ENCODE measurements at regions of chr16 and their contacts with region 1.

Region 1: GRCh38 chr16:61713787-61714186 is 322.5 kb downstream of the CDH8 start:
- DNase-seq: no peak
- ATAC-seq: no peak
- H3K4me3 ChIP-seq: no peak overlapping the region
- H3K4me3 Mint-ChIP-seq: no peak overlapping the region
- H3K27ac ChIP-seq: no peak overlapping the region
- H3K27ac Mint-ChIP-seq: no peak overlapping the region
- H3K4me1 ChIP-seq: no peaks in the 10 kb centered on the region
- H3K4me1 Mint-ChIP-seq: no peaks in the 10 kb centered on the region
- H3K27me3 ChIP-seq: no peaks in the 10 kb centered on the region
- H3K27me3 Mint-ChIP-seq: no peaks in the 10 kb centered on the region
- CTCF ChIP-seq: no peak

Region 2: GRCh38 chr16:60681043-60681442 is 1032.7 kb before region 1 on chr16:
- CTCF ChIA-PET with region 1: no interaction called
- POLR2A ChIA-PET with region 1: no interaction called
- intact Hi-C with region 1: loop called in 1 of 2 experiments (anchors 5 kb)
- DNase-seq: no peak
- ATAC-seq: no peak
- H3K4me3 ChIP-seq: no peak overlapping the region
- H3K4me3 Mint-ChIP-seq: no peak overlapping the region
- H3K27ac ChIP-seq: no peak overlapping the region
- H3K27ac Mint-ChIP-seq: no peak overlapping the region
- H3K4me1 ChIP-seq: no peaks in the 10 kb centered on the region
- H3K4me1 Mint-ChIP-seq: no peaks in the 10 kb centered on the region
- H3K27me3 ChIP-seq: no peaks in the 10 kb centered on the region
- H3K27me3 Mint-ChIP-seq: no peaks in the 10 kb centered on the region
- CTCF ChIP-seq: no peak

Region 3: DNA sequence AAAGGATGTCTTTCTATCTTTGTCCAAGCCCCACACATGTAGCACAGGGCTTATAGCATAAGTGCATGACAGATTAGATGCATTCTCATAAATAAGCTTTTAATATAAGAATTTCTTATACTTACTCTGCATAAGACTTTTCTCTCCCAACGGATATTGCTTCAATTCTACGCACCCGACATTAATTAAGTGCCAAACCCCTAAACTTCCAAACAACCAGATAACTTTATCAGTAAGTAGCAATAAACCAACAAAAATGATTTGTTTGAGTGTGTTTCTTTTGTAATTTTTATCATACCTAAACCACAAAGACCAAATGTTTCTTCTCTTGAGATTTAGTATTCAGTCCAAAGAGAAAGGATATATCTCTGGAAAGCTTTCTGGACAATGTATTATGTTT is 69.1 kb before region 1 on chr16:
- CTCF ChIA-PET with region 1: no interaction called
- POLR2A ChIA-PET with region 1: no interaction called
- intact Hi-C with region 1: loop called in 1 of 2 experiments (anchors 10 kb)
- DNase-seq: no peak
- ATAC-seq: no peak
- H3K4me3 ChIP-seq: no peak overlapping the region
- H3K4me3 Mint-ChIP-seq: no peak overlapping the region
- H3K27ac ChIP-seq: no peak overlapping the region
- H3K27ac Mint-ChIP-seq: no peak overlapping the region
- H3K4me1 ChIP-seq: no peaks in the 10 kb centered on the region
- H3K4me1 Mint-ChIP-seq: no peaks in the 10 kb centered on the region
- H3K27me3 ChIP-seq: no peaks in the 10 kb centered on the region
- H3K27me3 Mint-ChIP-seq: no peaks in the 10 kb centered on the region
- CTCF ChIP-seq: no peak

Measured in CD8-positive, alpha-beta T cell (primary cell).